ENCODE measurements at regions of chr5 and their contacts with region 1.

Region 1: DNA sequence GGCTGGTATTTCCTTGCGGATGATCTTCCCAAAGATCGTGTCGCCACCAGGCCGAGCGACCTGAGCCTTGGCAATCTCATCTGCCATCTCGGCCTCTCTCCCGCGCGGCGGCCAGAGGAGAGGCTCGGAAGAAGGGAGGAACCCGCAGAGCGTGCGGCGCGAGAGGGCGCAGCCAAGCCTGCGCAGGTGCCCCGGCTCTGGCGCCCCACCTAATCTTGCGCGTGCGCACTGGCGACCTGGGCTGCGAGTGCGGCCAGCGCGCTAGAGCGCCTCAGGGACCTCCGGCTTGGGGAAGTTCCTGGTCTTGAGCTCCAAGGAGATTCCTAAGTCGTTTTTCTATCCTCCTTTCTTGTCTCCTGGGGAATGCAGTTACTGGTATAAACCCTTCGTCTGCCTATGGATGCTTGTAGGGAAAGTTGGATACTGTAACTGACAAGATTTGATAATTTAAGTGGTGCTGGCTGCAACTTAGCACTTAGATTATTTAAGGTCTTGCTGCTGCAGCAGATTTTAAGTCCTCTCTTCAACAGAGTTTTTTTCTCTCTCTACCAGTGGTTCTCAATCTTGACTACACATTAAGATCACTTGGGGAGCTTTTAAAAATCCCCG is at the start of gene HINT1:
- DNase-seq: peak; percentile 82
- ATAC-seq: peak; percentile 93
- H3K4me3 ChIP-seq: peak within 1 kb of the TSS; percentile 78 to 93 (median 91)
- H3K27ac ChIP-seq: peak within 1 kb of the TSS; percentile 98
- H3K4me1 ChIP-seq: peaks cover 53% of the 10 kb centered on the region
- H3K27me3 ChIP-seq: no peaks in the 10 kb centered on the region; a peak in 1 of 5 replicates
- CTCF ChIP-seq: peak; percentile 76
- EP300 ChIP-seq: no peak
- POLR2A ChIP-seq: peak; percentile 90 to 92
- RAD21 ChIP-seq: 0 out of 2 replicates have a peak, but pooled peaks have one; percentile 5
- total RNA-seq, gene HINT1: 428 and 545 TPM in 2 replicates

Region 2: DNA sequence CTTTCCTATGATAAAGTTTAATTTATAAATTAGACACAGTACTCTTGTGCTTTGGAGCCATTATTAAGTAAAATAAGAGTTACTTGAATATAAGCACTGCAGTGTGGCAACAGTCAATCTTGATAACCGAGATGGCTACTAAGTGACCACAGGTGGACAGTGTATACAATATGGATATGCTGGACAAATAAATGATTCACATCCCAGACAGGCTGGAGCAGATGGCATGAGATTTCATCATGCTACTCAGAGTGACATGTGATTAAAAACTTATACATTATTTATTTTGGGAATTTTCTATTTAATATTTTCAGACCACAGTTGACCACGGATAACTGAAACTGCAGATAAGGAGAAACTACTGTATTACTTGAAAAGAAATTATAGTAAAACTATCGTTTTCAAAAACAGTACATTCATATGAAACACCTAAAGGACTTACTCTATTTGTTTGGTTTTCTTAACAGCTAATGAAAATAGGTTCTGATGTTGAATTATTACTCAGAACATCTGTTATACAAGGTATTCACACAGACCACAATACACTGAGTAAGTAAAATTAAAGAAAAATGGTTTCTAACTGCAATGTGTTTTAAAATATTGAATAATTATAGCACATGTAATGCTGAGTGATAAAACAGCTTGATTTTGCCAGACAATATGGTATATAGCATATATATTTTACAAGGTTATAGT is 21.5 kb after region 1 on chr5:
- CTCF ChIA-PET with region 1: no interaction called
- POLR2A ChIA-PET with region 1: no interaction called
- in situ Hi-C with region 1: no loop called
- intact Hi-C with region 1: no loop called
- DNase-seq: no peak
- ATAC-seq: no peak
- H3K4me3 ChIP-seq: no peak overlapping the region
- H3K27ac ChIP-seq: no peak overlapping the region
- H3K4me1 ChIP-seq: peaks cover 12% of the 10 kb centered on the region
- H3K27me3 ChIP-seq: no peaks in the 10 kb centered on the region; a peak in 1 of 5 replicates
- CTCF ChIP-seq: no peak
- EP300 ChIP-seq: no peak
- POLR2A ChIP-seq: no peak
- RAD21 ChIP-seq: no peak

Region 3: DNA sequence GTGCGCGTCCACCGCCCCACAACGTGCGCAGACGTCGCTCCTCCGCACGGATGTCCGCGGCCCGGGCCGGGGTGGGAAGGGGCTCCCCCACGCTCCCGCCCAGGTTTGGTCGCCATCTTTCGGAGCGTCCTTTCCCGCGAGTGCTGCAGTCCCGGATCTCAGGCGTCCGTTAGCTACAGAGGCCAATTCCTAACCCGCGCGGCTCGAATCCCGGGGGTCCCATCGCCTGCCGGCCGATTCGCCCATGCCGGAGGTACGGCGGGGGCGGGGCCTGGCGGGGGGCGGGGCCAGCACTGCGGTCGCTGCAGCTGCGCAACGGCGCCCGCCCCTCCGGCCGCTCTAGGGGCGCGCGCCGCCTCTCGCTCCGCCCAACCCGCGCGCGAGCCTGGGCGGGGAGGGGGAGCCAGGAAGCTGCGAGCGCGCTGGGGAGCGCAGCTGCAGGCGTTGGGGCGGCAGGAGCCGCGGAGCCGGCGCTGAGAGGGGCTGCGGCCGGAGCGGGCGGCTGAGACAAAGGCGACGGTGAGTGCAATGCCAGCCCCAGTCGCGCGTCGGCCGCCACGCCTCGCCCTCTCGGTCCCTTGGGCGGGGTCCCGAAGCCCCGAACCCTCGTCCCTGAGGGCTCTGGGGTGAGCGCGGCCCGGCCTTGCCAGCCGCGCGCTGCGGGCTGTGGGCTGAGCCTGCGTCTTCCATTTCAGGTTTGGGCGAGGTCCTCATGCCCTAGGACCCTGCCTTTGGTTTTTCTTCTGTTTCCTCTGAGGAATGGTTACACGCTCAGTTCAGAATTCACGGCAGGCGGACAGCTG is 98.6 kb after region 1 on chr5 and contains the start of gene CDC42SE2:
- CTCF ChIA-PET with region 1: no interaction called
- POLR2A ChIA-PET with region 1: interaction called, 9 read pairs
- in situ Hi-C with region 1: no loop called
- intact Hi-C with region 1: loop called (anchors 2 kb)
- DNase-seq: peak; percentile 66
- ATAC-seq: peak; percentile 97
- H3K4me3 ChIP-seq: peak within 1 kb of the TSS; percentile 94 to 99 (median 96)
- H3K27ac ChIP-seq: peak within 1 kb of the TSS; percentile 92
- H3K4me1 ChIP-seq: peaks cover 32% of the 10 kb centered on the region
- H3K27me3 ChIP-seq: no peaks in the 10 kb centered on the region; a peak in 1 of 5 replicates
- CTCF ChIP-seq: no peak
- EP300 ChIP-seq: no peak; a peak in 1 of 4 replicates
- POLR2A ChIP-seq: peak; percentile 89 to 92
- RAD21 ChIP-seq: peak; percentile 54; the same call in 1 of the 2 replicates
- total RNA-seq, gene CDC42SE2: 25.0 and 40.7 TPM in 2 replicates

Region 4: DNA sequence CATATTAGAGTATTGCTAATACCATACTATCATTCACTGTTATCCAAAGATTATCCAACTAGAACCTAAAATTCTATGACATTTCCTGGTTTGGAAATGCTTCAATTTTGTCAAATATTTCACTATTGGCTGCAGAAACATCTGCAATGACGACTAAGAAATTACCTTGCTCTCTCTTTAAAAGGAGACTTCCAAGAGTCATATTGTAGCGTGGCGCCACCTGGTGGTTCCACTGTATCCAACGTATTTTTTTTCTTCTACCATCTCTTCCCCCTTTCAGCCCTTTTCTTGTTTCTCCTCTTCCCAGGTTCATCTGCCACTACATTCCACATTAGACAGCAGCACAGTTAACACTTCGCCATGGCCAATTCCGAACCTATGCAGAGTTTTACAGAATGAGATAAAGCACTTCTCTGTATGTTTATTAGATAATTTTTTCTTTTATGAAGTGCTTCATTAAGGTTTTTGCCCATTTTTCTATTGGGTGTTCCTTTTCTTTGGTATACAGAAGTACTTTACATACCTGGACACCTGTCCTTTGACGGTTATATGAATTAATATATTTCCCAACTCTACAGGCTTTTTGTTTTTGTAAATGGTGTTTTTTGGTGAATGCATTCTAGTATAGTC is 252.1 kb after region 1 on chr5:
- CTCF ChIA-PET with region 1: interaction called, 9 read pairs
- POLR2A ChIA-PET with region 1: no interaction called
- in situ Hi-C with region 1: no loop called
- intact Hi-C with region 1: loop called (anchors 1 kb)
- DNase-seq: peak; percentile 56
- ATAC-seq: peak; percentile 71
- H3K4me3 ChIP-seq: no peak overlapping the region
- H3K27ac ChIP-seq: no peak overlapping the region
- H3K4me1 ChIP-seq: no peaks in the 10 kb centered on the region
- H3K27me3 ChIP-seq: no peaks in the 10 kb centered on the region
- CTCF ChIP-seq: peak; percentile 79
- EP300 ChIP-seq: no peak
- POLR2A ChIP-seq: no peak
- RAD21 ChIP-seq: 0 out of 2 replicates have a peak, but pooled peaks have one; percentile 28